Pancreas (tissue), 10 donors: ENCODE measurements at regions of chr6 and their contacts with region 1.

Region 1: GRCh38 chr6:119105282-119105681 is 26.8 kb upstream of the FAM184A start:
- DNase-seq: no peak
- ATAC-seq: no peak
- H3K4me3 ChIP-seq: no peak overlapping the region
- H3K27ac ChIP-seq: no peak overlapping the region
- H3K4me1 ChIP-seq: no peaks in the 10 kb centered on the region
- H3K27me3 ChIP-seq: no peaks in the 10 kb centered on the region
- CTCF ChIP-seq: no peak

Region 2: DNA sequence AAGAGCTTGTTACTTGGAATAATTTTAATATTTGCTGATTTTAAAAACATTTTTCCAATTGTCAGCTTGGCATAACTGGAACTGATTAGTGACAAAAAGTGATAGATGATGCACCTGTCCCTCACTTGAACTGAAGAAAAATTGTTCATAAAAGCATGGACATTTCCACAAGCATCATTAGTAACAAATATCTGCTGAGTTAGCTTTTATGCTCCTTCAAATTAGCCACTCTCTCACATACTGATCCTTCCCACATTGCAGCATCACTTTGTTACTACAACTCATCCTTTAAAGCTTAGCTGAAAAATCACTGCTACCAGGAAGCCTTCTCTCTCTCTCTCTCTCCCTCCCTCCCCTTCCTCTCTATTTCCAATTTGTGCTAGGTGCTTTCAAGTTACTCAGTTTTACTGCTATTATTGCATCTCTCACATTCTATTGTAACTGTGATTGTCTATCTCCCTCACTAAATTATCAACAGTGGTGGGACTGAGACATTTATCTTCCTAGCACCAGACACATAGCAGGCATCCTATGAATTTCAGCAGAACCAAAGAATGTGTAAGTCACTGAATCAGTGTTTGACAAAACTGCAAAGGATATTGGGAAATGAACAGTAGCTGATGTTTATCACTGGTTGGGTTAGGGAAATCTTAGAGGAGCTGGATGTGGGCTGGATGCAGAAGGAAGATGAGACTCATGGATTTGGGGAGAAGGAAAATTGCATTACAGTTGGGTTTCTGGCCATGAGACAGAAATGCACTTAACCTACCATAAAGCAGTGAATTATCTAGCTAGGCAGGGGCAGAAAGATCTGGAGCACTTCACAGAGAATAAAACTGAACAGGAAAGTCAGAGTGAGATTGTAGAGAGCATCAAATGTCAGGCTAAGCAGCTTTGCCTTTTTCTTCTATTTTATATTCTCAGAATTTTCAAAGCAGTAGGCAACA is 685.6 kb before region 1 on chr6:
- intact Hi-C with region 1: no loop called
- DNase-seq: no peak
- ATAC-seq: no peak
- H3K4me3 ChIP-seq: no peak overlapping the region
- H3K27ac ChIP-seq: no peak overlapping the region
- H3K4me1 ChIP-seq: no peaks in the 10 kb centered on the region
- H3K27me3 ChIP-seq: no peaks in the 10 kb centered on the region
- CTCF ChIP-seq: no peak

Region 3: GRCh38 chr6:118980063-118980462 is 125.2 kb before region 1 on chr6:
- intact Hi-C with region 1: loop called in 1 of 3 experiments (anchors 10 kb)
- DNase-seq: no peak
- ATAC-seq: no peak
- H3K4me3 ChIP-seq: no peak overlapping the region
- H3K27ac ChIP-seq: no peak overlapping the region
- H3K4me1 ChIP-seq: no peaks in the 10 kb centered on the region
- H3K27me3 ChIP-seq: no peaks in the 10 kb centered on the region
- CTCF ChIP-seq: no peak

Region 4: DNA sequence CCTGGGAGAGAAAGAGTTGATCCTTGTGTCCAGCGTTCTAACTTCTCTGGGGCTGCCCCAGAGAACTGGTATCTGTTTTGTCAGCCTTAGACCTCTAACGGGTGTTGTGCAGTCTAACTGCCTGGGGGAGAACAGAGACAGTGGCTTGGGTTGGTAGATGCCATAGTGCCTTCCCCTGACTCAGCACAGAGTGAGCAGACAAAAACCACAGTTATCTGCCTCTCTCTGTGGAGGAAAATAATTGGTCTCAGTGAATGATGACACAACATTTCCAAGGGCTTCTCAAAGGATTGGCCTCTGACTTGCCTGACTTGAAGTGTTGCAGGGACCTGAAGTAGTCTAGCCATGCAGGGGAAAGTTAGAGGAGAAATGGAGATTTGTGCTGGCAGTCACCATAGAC is 470.4 kb after region 1 on chr6:
- intact Hi-C with region 1: no loop called
- DNase-seq: no peak
- ATAC-seq: no peak
- H3K4me3 ChIP-seq: no peak overlapping the region
- H3K27ac ChIP-seq: no peak overlapping the region
- H3K4me1 ChIP-seq: no peaks in the 10 kb centered on the region
- H3K27me3 ChIP-seq: no peaks in the 10 kb centered on the region
- CTCF ChIP-seq: no peak